ENCODE measurements at regions of chr3 and their contacts with region 1.

Region 1: GRCh38 chr3:42831321-42831713 is 22.1 kb downstream of the ACKR2 start:
- DNase-seq: peak; percentile 90
- ATAC-seq: peak; percentile 92
- H3K4me3 Mint-ChIP-seq: no peak overlapping the region
- H3K27ac Mint-ChIP-seq: no peak overlapping the region
- H3K4me1 Mint-ChIP-seq: peaks cover 5% of the 10 kb centered on the region
- H3K27me3 Mint-ChIP-seq: peaks cover 2% of the 10 kb centered on the region

Region 2: DNA sequence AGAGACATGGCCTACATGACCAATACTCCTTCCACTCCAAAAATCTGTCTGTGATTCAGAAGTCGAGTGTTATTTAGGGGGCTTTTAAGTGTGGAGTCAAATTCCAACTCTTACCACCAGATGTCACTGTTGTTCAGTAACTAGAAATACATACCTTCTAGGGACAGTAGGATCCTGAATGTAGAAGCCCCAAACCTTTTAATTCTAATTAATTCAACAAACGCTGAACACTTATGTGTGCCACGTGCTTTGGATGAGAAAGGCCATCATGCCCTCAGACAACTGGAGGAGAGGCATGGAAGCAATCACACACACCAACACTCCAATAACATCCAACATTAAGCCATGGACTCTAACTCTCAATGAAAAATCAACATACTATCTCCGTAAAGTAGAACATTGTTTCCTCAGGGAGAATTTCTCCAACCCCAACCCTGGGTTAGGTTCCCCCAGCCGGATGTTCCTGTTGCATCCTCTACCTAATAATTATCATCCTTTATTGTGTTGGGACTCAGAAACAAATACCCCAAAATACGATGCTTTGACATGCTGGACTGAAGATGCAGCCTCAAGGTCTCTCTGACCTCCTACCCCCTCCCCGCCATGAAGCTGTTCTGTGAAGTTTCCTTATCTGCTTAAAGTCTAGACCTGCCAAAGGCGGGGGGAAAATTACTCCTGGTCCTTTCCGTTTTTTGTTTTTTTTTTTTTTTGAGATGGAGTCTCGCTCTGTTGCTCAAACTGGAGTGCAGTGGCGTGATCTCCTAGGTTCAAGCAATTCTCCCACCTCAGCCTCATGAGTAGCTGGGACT is 50.2 kb before region 1 on chr3:
- CTCF ChIA-PET with region 1: interaction called, 3 read pairs
- POLR2A ChIA-PET with region 1: no interaction called
- intact Hi-C with region 1: loop called (anchors 1 to 2 kb)
- DNase-seq: peak; percentile 29
- ATAC-seq: peak; percentile 87
- H3K4me3 Mint-ChIP-seq: no peak overlapping the region
- H3K27ac Mint-ChIP-seq: no peak overlapping the region
- H3K4me1 Mint-ChIP-seq: no peaks in the 10 kb centered on the region
- H3K27me3 Mint-ChIP-seq: no peaks in the 10 kb centered on the region

Region 3: DNA sequence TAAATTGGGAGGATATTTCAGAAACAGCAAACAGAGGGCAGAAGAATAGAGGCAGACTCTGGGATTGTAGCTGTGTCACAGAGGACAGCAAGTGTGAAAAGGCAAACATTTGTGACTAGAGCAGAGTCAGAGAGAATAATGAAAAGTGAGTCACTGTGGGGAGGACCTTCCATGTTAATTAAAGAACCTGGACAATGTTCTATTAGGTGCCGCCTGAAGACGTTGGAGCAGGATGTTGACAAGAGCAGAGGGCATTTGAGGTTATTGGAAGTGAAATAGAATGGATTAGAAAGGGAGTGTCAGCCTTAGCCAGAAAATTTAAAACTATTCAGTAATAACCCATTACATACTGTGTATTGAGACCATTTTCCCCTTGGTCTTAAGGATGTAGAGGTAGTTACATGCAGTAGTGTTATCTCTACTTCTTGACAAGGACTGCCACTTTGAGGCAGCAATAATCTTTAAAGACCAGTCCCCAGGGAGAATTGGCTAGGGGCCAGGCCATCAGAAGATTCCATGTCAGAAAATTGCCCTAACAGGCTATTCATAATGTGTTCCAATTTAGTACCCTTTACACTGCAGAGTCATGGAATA is 16.3 kb before region 1 on chr3:
- CTCF ChIA-PET with region 1: interaction called, 15 read pairs
- POLR2A ChIA-PET with region 1: no interaction called
- intact Hi-C with region 1: no loop called
- DNase-seq: no peak
- ATAC-seq: no peak
- H3K4me3 Mint-ChIP-seq: no peak overlapping the region
- H3K27ac Mint-ChIP-seq: no peak overlapping the region
- H3K4me1 Mint-ChIP-seq: no peaks in the 10 kb centered on the region
- H3K27me3 Mint-ChIP-seq: peaks cover 3% of the 10 kb centered on the region

Region 4: DNA sequence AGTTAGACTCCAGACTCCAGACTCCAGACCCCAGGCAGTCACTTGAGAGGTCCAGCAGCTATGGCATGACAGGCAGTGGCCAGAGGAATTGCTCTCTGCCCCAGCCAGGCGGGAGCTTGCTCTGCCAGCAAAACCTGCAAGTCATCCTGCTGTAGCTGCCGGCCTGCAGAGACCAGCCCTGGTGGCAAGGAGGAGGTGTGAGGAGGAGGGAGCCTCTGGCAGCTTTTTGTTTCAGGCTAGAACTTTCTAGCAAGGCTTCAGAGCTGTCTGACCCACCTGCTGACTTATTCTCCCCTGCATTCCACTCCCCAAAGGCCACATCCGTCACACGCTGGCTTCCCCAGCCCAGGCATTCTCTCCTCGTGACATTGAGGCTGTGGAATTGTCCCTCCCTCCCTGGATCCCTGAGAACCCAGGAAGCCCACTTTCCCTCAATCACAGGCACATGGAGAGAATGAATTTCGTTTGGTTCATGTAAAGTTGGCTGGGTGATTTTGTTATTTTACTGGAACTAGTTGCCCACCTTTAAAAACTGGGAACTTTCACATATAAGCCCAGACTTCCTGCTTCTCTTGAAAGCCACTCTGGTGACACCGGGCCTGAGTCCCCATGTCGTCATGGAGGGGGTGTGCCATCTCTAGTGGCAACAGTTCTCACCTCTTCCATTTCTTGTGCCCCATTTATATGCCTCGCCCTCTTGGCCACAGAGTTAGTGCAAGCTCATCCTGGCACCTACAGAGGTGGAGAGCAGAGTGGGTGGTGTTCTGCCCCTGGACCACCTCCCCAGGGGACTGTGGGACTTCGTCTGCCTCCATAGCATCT is 942.2 kb after region 1 on chr3:
- CTCF ChIA-PET with region 1: no interaction called
- POLR2A ChIA-PET with region 1: no interaction called
- intact Hi-C with region 1: no loop called
- DNase-seq: peak; percentile 34
- ATAC-seq: no peak
- H3K4me3 Mint-ChIP-seq: no peak overlapping the region
- H3K27ac Mint-ChIP-seq: no peak overlapping the region
- H3K4me1 Mint-ChIP-seq: peaks cover 25% of the 10 kb centered on the region
- H3K27me3 Mint-ChIP-seq: no peaks in the 10 kb centered on the region

Measured in activated CD4-positive, alpha-beta T cell treated with anti-CD3 and anti-CD28 coated beads for 36 hours (primary cell).